Activated B cell treated with CpG ODN at 0.5 μM for 24 hours (primary cell): ENCODE measurements at regions of chr2 and their contacts with region 1.

Region 1: GRCh38 chr2:45889053-45889452 is 237.6 kb downstream of the PRKCE start:
- DNase-seq: no peak
- ATAC-seq: peak; percentile 79
- H3K4me3 Mint-ChIP-seq: peak overlapping the region; percentile 36
- H3K27ac Mint-ChIP-seq: peak overlapping the region; percentile 51
- H3K4me1 Mint-ChIP-seq: peaks cover 90% of the 10 kb centered on the region
- H3K27me3 Mint-ChIP-seq: no peaks in the 10 kb centered on the region
- CTCF ChIP-seq: no peak

Region 2: GRCh38 chr2:45483997-45484396 is 405.1 kb before region 1 on chr2:
- CTCF ChIA-PET with region 1: no interaction called
- POLR2A ChIA-PET with region 1: no interaction called
- intact Hi-C with region 1: no loop called
- DNase-seq: no peak
- ATAC-seq: no peak
- H3K4me3 Mint-ChIP-seq: no peak overlapping the region
- H3K27ac Mint-ChIP-seq: no peak overlapping the region
- H3K4me1 Mint-ChIP-seq: no peaks in the 10 kb centered on the region
- H3K27me3 Mint-ChIP-seq: no peaks in the 10 kb centered on the region
- CTCF ChIP-seq: no peak

Region 3: DNA sequence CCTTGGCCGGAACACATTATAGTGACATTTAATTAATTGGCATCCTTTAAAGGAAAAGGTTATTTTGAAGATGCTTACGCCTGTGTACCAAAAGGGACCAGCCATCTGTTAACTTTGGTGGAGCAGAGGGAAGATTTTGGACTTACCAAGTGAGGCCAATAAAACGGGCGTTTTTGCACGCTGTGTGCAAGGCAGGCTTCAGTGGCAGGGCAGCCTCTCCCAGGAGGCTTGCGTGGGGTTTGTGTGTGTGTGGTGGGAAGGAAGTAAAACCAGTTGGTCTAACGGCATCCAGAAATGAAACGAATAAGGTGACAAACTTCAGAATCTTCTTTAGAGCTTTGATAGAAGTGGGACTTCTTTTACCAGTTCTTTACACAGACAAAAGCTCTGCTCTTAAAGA is 45.9 kb before region 1 on chr2:
- CTCF ChIA-PET with region 1: interaction called, 3 read pairs
- POLR2A ChIA-PET with region 1: interaction called, 6 read pairs
- intact Hi-C with region 1: loop called (anchors 2 kb)
- DNase-seq: peak; percentile 54
- ATAC-seq: peak; percentile 95
- H3K4me3 Mint-ChIP-seq: peak overlapping the region; percentile 63
- H3K27ac Mint-ChIP-seq: peak overlapping the region; percentile 75
- H3K4me1 Mint-ChIP-seq: peaks cover 64% of the 10 kb centered on the region
- H3K27me3 Mint-ChIP-seq: no peaks in the 10 kb centered on the region
- CTCF ChIP-seq: no peak

Region 4: GRCh38 chr2:45909663-45910191 is 20.7 kb after region 1 on chr2:
- CTCF ChIA-PET with region 1: interaction called, 4 read pairs
- POLR2A ChIA-PET with region 1: interaction called, 4 read pairs
- intact Hi-C with region 1: loop called (anchors 1 kb)
- DNase-seq: no peak
- ATAC-seq: peak; percentile 84
- H3K4me3 Mint-ChIP-seq: peak overlapping the region; percentile 53
- H3K27ac Mint-ChIP-seq: peak overlapping the region; percentile 73
- H3K4me1 Mint-ChIP-seq: peaks cover 70% of the 10 kb centered on the region
- H3K27me3 Mint-ChIP-seq: no peaks in the 10 kb centered on the region
- CTCF ChIP-seq: no peak

Region 5: GRCh38 chr2:45930396-45930792 is 41.3 kb after region 1 on chr2:
- CTCF ChIA-PET with region 1: no interaction called
- POLR2A ChIA-PET with region 1: no interaction called
- intact Hi-C with region 1: loop called (anchors 2 kb)
- DNase-seq: no peak
- ATAC-seq: no peak
- H3K4me3 Mint-ChIP-seq: no peak overlapping the region
- H3K27ac Mint-ChIP-seq: peak overlapping the region; percentile 79
- H3K4me1 Mint-ChIP-seq: peaks cover 26% of the 10 kb centered on the region
- H3K27me3 Mint-ChIP-seq: no peaks in the 10 kb centered on the region
- CTCF ChIP-seq: no peak

Region 6: DNA sequence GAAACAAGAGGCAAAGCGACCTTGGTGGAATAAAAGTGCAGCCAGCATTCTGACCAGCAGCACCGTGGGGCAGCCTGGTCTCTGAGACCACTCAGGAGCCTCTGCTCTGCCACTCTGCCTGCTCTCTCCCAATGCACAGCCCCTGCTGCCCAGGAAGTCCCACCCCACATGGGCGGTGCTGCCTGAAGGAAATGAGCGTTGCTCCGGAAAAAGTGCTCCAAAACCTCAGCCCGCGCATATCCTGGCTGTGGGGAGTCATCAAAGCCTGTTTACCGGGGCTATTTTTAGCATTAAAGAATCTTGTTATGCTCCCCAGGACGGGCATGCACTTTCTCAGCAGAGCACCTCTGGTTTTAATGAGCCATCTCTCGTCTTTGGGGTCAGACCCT is 462.7 kb after region 1 on chr2:
- CTCF ChIA-PET with region 1: no interaction called
- POLR2A ChIA-PET with region 1: no interaction called
- intact Hi-C with region 1: no loop called
- DNase-seq: no peak
- ATAC-seq: peak; percentile 45
- H3K4me3 Mint-ChIP-seq: peak overlapping the region; percentile 69
- H3K27ac Mint-ChIP-seq: no peak overlapping the region
- H3K4me1 Mint-ChIP-seq: peaks cover 17% of the 10 kb centered on the region
- H3K27me3 Mint-ChIP-seq: peaks cover 8% of the 10 kb centered on the region
- CTCF ChIP-seq: no peak